ENCODE measurements at regions of chr7 and their contacts with region 1.

Region 1: DNA sequence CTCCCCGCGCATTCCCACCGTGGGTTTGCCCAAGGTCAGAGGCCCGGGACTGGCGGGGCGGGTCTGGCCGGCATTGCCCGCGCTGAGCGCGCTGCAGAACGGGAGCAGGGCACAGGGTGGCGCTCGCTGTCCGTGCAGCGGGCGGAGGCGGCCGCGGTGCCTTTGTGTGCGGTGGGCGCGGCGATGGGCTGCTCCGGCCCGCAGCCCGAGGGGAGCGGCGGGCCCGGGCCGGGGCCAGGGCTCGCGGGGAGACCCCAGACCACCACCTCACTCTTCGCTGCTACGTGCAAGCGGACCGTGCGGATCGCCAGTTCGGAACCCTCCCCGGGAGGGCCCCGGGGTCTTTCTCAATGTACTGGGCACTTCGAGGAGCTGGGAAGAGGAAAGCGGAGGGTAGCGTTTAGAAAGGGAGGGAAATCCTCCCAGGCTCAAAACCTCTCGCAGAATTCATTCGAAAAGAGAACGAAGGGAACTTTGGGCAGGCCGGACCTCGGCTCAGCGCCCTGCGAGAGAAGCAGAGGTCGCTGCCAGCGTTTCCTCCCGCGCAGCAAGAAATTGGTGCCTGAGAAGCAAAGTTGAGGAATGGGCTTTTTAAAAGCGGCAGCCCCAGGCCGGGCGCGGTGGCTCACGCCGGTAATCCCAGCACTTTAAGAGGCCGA is 8.5 kb downstream of the SP8 start:
- DNase-seq: peak; percentile 56
- H3K4me3 ChIP-seq: peak overlapping the region; percentile 37
- H3K27ac ChIP-seq: no peak overlapping the region
- H3K4me1 ChIP-seq: peaks cover 6% of the 10 kb centered on the region
- H3K27me3 ChIP-seq: peaks cover 98% of the 10 kb centered on the region
- CTCF ChIP-seq: peak; percentile 69

Region 2: DNA sequence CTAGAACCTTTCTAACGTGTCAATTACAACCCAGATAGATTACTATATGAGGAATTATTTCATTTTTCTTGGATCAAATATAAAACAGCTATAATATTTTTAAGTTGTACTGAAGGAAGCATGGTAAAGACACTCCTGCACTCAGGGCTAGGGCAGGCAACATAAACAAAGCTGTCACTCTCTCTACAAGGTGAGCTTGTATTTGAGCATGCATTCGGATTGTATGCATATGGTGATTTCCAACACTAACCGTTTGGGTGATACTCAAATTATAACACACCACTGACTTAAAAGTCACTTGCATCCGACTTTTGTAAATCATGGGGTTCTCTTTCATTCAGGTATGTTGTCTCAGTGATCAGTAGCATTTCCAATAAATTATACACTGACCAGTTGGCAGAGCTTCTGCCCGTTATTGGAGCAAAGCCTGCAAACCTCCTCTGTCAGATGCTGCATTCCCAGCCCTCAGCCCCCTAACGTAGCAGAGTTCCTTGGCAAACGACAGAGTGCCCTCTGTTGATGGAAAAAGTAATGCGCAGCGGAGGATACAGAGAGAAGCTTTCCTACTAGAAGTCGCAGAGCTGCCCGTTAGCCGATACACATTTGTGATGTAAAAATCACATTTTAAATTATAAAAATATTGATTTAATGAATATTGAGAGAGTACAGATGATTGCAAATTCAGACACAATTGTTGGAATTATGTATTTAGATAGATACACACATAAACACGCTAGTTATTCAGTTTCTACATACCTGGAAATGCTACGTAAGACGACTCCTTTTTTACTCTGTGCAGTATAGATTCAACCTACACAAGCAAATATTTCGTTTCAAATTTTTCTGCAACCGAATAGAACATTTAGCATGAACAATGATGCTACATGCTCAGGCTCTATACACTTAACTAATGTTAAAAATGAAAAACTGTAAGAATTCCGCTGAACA is 475.8 kb after region 1 on chr7:
- CTCF ChIA-PET with region 1: interaction called, 5 read pairs
- POLR2A ChIA-PET with region 1: no interaction called
- intact Hi-C with region 1: loop called (anchors 1 kb)
- DNase-seq: peak; percentile 76
- H3K4me3 ChIP-seq: no peak overlapping the region
- H3K27ac ChIP-seq: no peak overlapping the region
- H3K4me1 ChIP-seq: no peaks in the 10 kb centered on the region
- H3K27me3 ChIP-seq: peaks cover 87% of the 10 kb centered on the region
- CTCF ChIP-seq: peak; percentile 74

Measured in A673 (cell line).